Activated naive CD4-positive, alpha-beta T cell treated with anti-CD3 and anti-CD28 coated beads for 36 hours (primary cell): ENCODE measurements at regions of chr5 and their contacts with region 1.

Region 1: GRCh38 chr5:442335-443238 is at the start of gene EXOC3:
- DNase-seq: peak; percentile 71
- H3K4me3 Mint-ChIP-seq: peak within 1 kb of the TSS; percentile 95
- H3K27ac Mint-ChIP-seq: peak within 1 kb of the TSS; percentile 87
- H3K4me1 Mint-ChIP-seq: peaks cover 29% of the 10 kb centered on the region
- H3K27me3 Mint-ChIP-seq: no peaks in the 10 kb centered on the region
- total RNA-seq, gene EXOC3: 41.6 to 41.7 TPM

Region 2: DNA sequence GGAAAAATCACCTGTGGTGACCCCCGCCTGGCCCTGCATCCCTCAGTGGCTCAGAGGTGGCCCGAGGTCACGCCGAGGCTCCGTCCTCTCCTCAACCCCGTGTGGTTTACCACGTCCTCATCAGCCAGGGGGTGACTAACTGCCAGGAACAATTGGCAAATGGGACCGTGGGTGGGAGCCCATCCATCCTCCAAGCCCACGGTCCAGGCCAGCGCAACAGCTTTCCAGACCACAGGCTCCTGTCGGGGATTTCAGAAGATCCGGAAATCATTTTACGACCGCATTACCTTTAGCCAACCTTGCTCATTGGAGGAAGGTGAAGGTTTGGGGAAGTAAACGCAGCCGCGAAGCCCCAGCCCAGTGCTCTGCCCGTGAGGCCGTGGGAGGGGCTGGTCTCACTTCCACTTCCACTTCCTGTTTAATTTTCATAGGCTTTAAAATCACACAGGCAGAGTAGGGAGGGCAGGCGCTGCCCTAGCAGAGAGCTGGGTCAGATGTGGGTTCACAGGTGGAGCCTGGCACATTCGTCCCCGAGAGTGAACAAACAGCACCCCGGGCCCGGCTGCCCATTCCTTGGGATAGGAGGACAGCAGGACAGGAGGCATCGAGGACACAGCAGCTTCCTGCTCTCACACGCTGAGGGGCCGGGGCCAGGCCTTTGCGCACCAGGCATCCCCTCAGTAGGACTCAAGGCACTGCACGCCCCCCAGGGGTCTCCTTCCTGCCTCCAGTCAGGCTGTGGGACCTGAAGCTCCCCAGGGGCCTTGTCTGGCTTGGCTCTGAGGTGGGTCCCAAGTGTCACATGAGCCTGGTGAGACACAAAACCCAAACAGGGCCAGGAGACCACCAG is 101.5 kb after region 1 on chr5:
- CTCF ChIA-PET with region 1: interaction called, 11 read pairs
- intact Hi-C with region 1: no loop called
- DNase-seq: peak; percentile 70
- H3K4me3 Mint-ChIP-seq: peak overlapping the region; percentile 32
- H3K27ac Mint-ChIP-seq: peak overlapping the region; percentile 41
- H3K4me1 Mint-ChIP-seq: peaks cover 6% of the 10 kb centered on the region
- H3K27me3 Mint-ChIP-seq: peaks cover 6% of the 10 kb centered on the region

Region 3: GRCh38 chr5:611721-612486 is 169.3 kb after region 1 on chr5 and contains the start of gene CEP72:
- CTCF ChIA-PET with region 1: interaction called, 6 read pairs
- intact Hi-C with region 1: loop called (anchors 1 kb)
- DNase-seq: peak; percentile 94
- H3K4me3 Mint-ChIP-seq: peak within 1 kb of the TSS; percentile 93
- H3K27ac Mint-ChIP-seq: peak within 1 kb of the TSS; percentile 74
- H3K4me1 Mint-ChIP-seq: peaks cover 51% of the 10 kb centered on the region
- H3K27me3 Mint-ChIP-seq: peaks cover 8% of the 10 kb centered on the region
- total RNA-seq, gene CEP72: 18.3 to 18.8 TPM